ENCODE measurements at regions of chr14 and their contacts with region 1.

Region 1: GRCh38 chr14:57066887-57067513 is 201.7 kb downstream of the EXOC5 start:
- DNase-seq: peak; percentile 12
- H3K4me3 Mint-ChIP-seq: no peak overlapping the region
- H3K27ac Mint-ChIP-seq: no peak overlapping the region
- H3K4me1 Mint-ChIP-seq: no peaks in the 10 kb centered on the region
- H3K27me3 Mint-ChIP-seq: peaks cover 37% of the 10 kb centered on the region

Region 2: GRCh38 chr14:56491299-56492285 is 575.4 kb before region 1 on chr14:
- intact Hi-C with region 1: loop called (anchors 10 kb)
- DNase-seq: no peak
- H3K4me3 Mint-ChIP-seq: no peak overlapping the region
- H3K27ac Mint-ChIP-seq: no peak overlapping the region
- H3K4me1 Mint-ChIP-seq: peaks cover 4% of the 10 kb centered on the region
- H3K27me3 Mint-ChIP-seq: peaks cover 1% of the 10 kb centered on the region

Region 3: GRCh38 chr14:56810147-56810719 is 256.8 kb before region 1 on chr14 and contains the start of gene OTX2:
- intact Hi-C with region 1: loop called (anchors 5 kb)
- DNase-seq: no peak
- H3K4me3 Mint-ChIP-seq: no peak within 1 kb of the TSS
- H3K27ac Mint-ChIP-seq: peak within 1 kb of the TSS; percentile 9
- H3K4me1 Mint-ChIP-seq: peaks cover 8% of the 10 kb centered on the region
- H3K27me3 Mint-ChIP-seq: peaks cover 81% of the 10 kb centered on the region
- total RNA-seq, gene OTX2: not detected in 2 replicates

Region 4: GRCh38 chr14:56992332-56992820 is 74.6 kb before region 1 on chr14:
- intact Hi-C with region 1: no loop called
- DNase-seq: no peak
- H3K4me3 Mint-ChIP-seq: no peak overlapping the region
- H3K27ac Mint-ChIP-seq: no peak overlapping the region
- H3K4me1 Mint-ChIP-seq: no peaks in the 10 kb centered on the region
- H3K27me3 Mint-ChIP-seq: no peaks in the 10 kb centered on the region

Region 5: DNA sequence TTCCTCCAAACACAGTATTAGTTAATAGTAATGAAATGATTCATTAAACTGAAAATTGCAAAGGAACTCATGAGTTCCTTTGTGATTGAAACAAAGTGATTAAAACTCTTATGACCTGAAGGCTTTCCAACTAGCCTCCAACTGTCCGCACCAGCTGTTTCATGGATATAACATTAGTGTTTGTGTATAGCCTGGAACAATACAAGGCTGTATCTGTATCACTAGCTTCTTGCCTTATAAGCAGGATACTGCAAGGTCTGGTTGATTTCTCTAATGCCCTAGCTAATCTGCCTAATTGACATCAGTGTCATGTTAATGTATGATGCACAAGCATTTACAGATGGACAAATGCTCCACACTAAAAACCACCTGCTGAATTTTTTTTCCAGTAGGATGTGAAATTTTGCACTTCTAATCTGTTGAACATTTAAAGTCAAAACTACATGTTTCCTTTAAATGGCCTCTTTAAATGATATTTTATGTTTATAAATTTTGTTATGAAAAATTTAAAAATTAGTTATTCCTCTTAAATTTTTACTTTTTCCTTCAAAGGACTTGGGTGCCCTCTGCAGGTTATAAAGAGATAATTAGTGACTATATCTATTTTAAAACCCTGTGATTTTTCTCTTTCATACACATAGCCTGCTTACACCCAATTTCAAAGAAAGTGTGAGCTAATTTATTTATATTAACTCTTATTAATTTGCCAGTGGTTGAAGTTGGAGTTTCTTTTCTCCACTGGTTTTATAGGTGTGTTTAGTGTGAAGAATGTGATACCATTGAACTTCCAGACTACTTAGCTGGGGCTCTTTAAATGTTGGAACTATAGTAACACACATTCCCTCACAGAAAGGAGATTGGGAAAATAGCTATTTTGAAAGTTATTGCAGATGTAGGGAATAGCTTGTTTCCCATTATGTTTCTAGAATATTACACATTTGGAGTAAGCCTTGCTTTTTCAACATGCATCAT is 227.2 kb after region 1 on chr14:
- intact Hi-C with region 1: loop called (anchors 10 kb)
- DNase-seq: no peak
- H3K4me3 Mint-ChIP-seq: no peak overlapping the region
- H3K27ac Mint-ChIP-seq: no peak overlapping the region
- H3K4me1 Mint-ChIP-seq: no peaks in the 10 kb centered on the region
- H3K27me3 Mint-ChIP-seq: no peaks in the 10 kb centered on the region

Measured in activated T-helper 2 cell treated with anti-CD3 and anti-CD28 coated beads, Interferon-gamma antibody, Interleukin-2, Interleukin-4, amounts not matched to agents 10 μg/mL and 5 μg/mL and 100 μg/mL, durations not matched to agents 14 hours and 24 hours and 36 hours (primary cell).